Right ventricle myocardium superior (tissue), 1 donor: ENCODE measurements at regions of chr15 and their contacts with region 1.

Region 1: DNA sequence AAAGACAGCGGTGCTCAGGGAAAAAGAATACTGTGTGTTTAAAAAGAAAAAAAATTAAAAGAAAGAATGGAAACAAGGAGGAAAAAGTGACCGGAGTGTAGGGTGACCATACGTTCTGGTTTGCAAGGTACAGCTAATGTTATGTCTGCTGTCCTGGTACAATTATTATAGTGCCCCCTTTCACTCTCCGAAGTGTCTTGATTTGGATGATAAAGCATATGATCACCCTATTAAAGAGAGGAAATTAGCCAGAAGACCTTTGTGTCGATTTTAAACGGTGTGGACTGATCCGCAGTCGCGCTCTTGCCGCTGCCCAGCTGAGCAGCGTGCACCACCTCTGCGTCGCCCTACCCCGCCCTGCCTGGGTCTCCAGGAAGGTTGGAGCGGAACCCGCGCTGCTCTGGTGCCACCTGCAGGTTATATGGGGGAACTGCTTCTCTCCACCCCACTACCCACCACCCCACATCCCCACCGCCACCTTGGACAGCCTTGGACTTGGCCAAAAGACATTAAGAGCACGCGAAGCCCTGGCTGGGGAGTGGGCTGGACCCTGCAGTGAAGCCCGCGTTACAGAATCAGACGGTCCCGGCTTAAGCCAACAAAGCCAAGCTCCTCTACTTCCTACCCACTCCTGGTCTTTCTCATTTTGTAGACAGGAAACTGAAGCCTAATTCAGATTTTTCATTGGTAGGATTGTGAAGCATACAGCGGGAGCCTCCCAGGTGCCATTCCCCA is 41.2 kb upstream of the UBE2Q2 start:
- DNase-seq: peak; percentile 87
- ATAC-seq: peak; percentile 99

Region 2: GRCh38 chr15:75684642-75685041 is 117.4 kb before region 1 on chr15:
- intact Hi-C with region 1: loop called (anchors 10 kb)
- DNase-seq: no peak
- ATAC-seq: no peak

Region 3: GRCh38 chr15:75981149-75981815 is 179.3 kb after region 1 on chr15:
- intact Hi-C with region 1: no loop called
- DNase-seq: no peak
- ATAC-seq: no peak